Dorsolateral prefrontal cortex (tissue), 120 donors: ENCODE measurements at regions of chr5 and their contacts with region 1.

Region 1: DNA sequence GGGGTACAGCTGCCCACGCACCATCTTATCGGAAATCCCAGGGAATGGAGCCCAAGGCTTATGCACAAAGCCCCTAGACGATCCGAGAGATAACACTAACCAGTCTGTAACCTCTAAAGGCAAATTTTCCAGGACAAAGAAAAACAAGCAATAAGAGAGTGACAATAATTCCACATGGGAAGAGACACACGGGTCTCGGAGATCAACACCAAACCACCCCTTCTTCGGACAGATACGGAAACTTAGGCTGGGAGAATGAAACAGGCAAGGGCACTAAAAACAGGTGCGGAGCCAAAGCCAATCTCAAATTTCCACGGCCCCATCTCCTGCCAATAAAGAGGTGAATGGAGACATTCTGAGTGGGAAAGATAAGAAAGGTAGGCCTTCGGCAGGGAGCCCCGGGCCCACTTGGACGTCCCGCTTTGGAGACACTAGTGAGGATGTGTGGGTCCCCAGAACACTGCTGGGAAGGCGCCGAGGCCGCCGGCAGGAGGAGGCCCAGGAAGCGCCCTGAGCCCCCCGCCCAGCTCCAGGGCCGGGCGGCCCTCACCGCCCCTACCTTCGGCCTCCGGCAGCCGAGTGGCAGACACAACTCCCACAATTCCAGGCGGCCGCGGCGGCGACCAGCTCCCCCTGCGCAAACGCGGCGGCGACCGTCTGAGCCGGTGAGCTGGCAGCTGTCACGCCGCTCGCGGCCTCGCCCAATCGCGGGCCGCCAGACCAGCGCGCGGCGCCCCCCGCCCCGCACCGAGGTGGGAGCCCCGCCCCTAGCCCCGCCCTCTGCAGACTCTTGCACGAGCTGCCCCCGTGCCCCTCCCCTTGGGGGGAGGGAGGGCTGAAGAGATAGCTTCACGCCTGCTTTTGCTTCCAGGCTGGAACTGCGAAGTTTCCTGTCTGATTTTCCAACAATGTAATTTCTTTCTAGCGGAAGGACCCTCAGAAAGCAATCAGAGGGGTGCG is at the start of gene SIL1:
- DNase-seq: peak; percentile 92 to 98 (median 96)
- H3K4me3 ChIP-seq: peak within 1 kb of the TSS; percentile 55 to 100 (median 85)
- H3K27ac ChIP-seq: peak within 1 kb of the TSS; percentile 44 to 98 (median 92)
- H3K27me3 ChIP-seq: no peaks in the 10 kb centered on the region
- CTCF ChIP-seq: peak in 34 of 56 donors; percentile 5 to 61 (median 35)
- total RNA-seq, gene SIL1: 21.5 to 48.7 (median 34.1) TPM

Region 2: GRCh38 chr5:139091439-139092156 is 106.4 kb before region 1 on chr5:
- intact Hi-C with region 1: loop called in 1 of 2 experiments (anchors 10 kb)
- DNase-seq: no peak
- H3K4me3 ChIP-seq: no peak overlapping the region
- H3K27ac ChIP-seq: peak overlapping the region in 11 of 59 donors; percentile 7 to 64 (median 25)
- H3K27me3 ChIP-seq: no peaks in the 10 kb centered on the region
- CTCF ChIP-seq: peak in 49 of 56 donors; percentile 16 to 71 (median 42)

Region 3: DNA sequence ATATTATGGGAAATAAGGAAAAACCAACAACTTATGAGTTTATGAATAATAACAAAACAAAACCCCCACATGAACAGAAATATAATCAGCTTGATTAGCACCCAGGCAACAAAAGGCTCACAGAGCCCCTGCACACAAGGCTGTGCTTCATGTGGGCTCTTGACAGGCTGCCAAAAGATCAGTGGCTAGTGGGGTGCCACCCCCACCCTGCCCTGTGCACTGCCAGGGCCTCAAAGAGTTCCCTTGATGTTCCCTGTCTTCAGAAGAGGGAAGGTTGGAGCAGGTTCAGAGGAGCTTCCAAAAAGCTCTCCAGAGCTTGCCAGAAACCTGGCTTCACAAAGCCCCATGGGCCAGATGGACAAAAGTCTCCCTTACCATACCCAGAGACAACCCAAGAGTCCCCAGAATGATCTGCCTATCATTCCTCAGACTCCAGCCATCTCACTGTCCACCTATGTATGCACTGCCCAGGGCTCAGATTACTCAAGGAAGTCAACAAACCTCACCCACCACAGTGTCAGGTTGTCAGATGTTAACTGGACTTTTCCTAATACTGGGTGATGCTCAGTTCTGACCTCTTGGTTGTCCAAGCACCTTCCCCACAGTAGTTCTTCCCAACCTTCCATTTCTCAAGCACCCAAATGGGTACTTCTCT is 87.3 kb before region 1 on chr5:
- intact Hi-C with region 1: loop called in 1 of 2 experiments (anchors 10 kb)
- DNase-seq: peak in 5 of 10 donors; percentile 26 to 66 (median 65)
- H3K4me3 ChIP-seq: peak overlapping the region in 1 of 59 donors; percentile 10
- H3K27ac ChIP-seq: peak overlapping the region; percentile 5 to 95 (median 84)
- H3K27me3 ChIP-seq: no peaks in the 10 kb centered on the region
- CTCF ChIP-seq: no peak

Region 4: DNA sequence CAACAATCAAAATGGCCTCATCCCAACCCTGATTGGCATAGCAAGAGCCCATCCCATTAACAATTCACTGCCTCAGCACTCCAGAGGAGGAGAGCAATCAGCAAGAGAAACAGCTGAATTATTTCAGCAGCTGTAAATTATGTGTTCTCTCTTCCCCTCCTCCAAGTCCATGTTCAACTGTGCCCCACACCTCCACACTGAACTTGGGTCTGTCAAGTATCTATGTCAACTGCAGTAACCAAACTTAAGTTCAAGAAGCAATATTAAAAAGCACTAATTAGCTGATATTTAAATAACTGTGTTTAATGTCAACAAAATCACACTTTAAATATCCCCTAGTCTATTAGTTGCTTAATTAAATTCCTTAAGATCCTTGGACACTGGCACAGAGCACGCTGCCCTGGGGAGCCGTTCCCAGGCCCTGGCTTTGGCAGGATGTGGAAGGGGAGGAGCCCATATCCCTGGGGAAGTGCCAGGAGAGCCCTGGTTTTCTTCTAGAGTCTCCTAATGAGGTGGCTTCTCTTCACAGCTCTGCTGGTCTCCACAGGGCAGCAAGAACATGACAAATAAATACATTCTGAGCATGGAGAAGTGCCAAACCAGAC is 50.4 kb before region 1 on chr5:
- intact Hi-C with region 1: no loop called
- DNase-seq: peak in 4 of 10 donors; percentile 44 to 59 (median 55)
- H3K4me3 ChIP-seq: no peak overlapping the region
- H3K27ac ChIP-seq: peak overlapping the region in 44 of 59 donors; percentile 5 to 68 (median 44)
- H3K27me3 ChIP-seq: no peaks in the 10 kb centered on the region
- CTCF ChIP-seq: no peak